Activated naive CD4-positive, alpha-beta T cell treated with anti-CD3 and anti-CD28 coated beads for 36 hours (primary cell): ENCODE measurements at regions of chr3 and their contacts with region 1.

Region 1: GRCh38 chr3:30768703-30769685 is 125.5 kb downstream of the GADL1 start:
- DNase-seq: peak; percentile 87
- H3K4me3 Mint-ChIP-seq: no peak overlapping the region
- H3K27ac Mint-ChIP-seq: no peak overlapping the region
- H3K4me1 Mint-ChIP-seq: no peaks in the 10 kb centered on the region
- H3K27me3 Mint-ChIP-seq: no peaks in the 10 kb centered on the region

Region 2: GRCh38 chr3:29958816-29959215 is 810.2 kb before region 1 on chr3:
- CTCF ChIA-PET with region 1: no interaction called
- intact Hi-C with region 1: no loop called
- DNase-seq: no peak
- H3K4me3 Mint-ChIP-seq: no peak overlapping the region
- H3K27ac Mint-ChIP-seq: no peak overlapping the region
- H3K4me1 Mint-ChIP-seq: no peaks in the 10 kb centered on the region
- H3K27me3 Mint-ChIP-seq: peaks cover 7% of the 10 kb centered on the region

Region 3: GRCh38 chr3:30779686-30780287 is 10.8 kb after region 1 on chr3:
- CTCF ChIA-PET with region 1: interaction called, 12 read pairs
- intact Hi-C with region 1: no loop called
- DNase-seq: peak; percentile 20
- H3K4me3 Mint-ChIP-seq: no peak overlapping the region
- H3K27ac Mint-ChIP-seq: no peak overlapping the region
- H3K4me1 Mint-ChIP-seq: no peaks in the 10 kb centered on the region
- H3K27me3 Mint-ChIP-seq: peaks cover 3% of the 10 kb centered on the region

Region 4: GRCh38 chr3:30894538-30895251 is 125.7 kb after region 1 on chr3 and contains the start of gene GADL1:
- CTCF ChIA-PET with region 1: interaction called, 5 read pairs
- intact Hi-C with region 1: loop called (anchors 5 kb)
- DNase-seq: peak; percentile 38
- H3K4me3 Mint-ChIP-seq: peak within 1 kb of the TSS; percentile 57
- H3K27ac Mint-ChIP-seq: no peak within 1 kb of the TSS
- H3K4me1 Mint-ChIP-seq: peaks cover 16% of the 10 kb centered on the region
- H3K27me3 Mint-ChIP-seq: peaks cover 30% of the 10 kb centered on the region
- total RNA-seq, gene GADL1: not detected

Region 5: DNA sequence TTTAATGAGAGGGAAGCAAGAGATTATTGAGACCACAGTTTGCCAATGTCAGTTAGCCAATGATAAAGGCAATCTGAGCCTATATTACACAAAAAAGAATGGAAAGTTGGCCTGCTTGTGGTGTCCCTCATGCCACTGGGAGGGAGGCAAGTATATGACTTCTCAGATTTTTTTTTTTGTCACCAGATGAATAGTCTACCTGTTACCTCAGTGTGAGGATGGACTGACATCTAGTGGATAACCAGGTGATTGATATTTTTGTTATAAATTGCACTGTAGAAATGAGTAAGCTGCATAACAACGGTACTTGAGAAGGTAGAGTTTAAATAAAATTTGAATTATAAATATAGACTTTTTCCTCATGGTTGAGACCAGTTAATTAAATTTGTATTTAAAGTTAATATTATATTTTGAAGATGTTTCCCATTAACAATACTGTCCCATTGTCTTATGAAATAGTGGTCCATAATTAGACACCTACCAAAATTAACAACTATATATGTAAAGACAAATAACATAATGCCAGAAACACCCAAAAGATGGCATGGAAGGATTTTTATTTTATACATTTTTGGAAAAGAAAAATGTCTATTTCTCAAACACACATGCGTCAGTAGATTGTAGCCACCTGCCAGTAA is 363.3 kb after region 1 on chr3:
- CTCF ChIA-PET with region 1: interaction called, 5 read pairs
- intact Hi-C with region 1: loop called (anchors 1 kb)
- DNase-seq: no peak
- H3K4me3 Mint-ChIP-seq: no peak overlapping the region
- H3K27ac Mint-ChIP-seq: no peak overlapping the region
- H3K4me1 Mint-ChIP-seq: no peaks in the 10 kb centered on the region
- H3K27me3 Mint-ChIP-seq: no peaks in the 10 kb centered on the region

Region 6: DNA sequence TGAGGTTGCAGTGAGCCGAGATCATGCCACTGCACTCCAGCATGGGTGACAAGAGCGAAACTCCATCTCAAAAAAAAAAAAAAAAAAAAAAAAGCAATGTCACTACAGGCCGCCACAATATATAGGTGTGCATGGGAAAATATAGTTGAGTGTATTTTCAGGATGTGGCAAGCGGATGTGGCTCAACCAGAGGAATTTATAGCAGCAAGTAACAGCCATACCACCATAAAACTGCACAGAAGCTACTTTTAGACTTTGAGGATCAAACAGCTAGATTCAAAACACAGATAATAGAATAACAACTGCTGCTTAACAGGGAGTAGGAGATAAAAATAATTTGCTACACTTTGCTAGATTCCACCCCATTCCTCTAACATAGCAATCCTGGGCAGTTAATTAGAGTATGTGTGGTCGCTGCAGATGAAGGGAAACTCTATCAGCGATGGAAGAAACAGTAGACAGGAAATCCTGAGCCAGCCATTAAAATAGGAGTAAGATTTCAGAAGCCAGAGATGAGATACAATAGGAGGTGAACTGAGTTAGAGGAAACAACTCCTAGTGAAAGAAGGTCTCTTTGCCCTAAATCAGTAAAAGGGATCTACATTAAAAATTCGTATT is 445.0 kb after region 1 on chr3:
- CTCF ChIA-PET with region 1: no interaction called
- intact Hi-C with region 1: loop called (anchors 2 kb)
- DNase-seq: peak; percentile 49
- H3K4me3 Mint-ChIP-seq: no peak overlapping the region
- H3K27ac Mint-ChIP-seq: peak overlapping the region; percentile 3
- H3K4me1 Mint-ChIP-seq: peaks cover 88% of the 10 kb centered on the region
- H3K27me3 Mint-ChIP-seq: no peaks in the 10 kb centered on the region

Region 7: GRCh38 chr3:31704591-31705179 is 935.7 kb after region 1 on chr3:
- CTCF ChIA-PET with region 1: no interaction called
- intact Hi-C with region 1: loop called (anchors 5 kb)
- DNase-seq: peak; percentile 74
- H3K4me3 Mint-ChIP-seq: peak overlapping the region; percentile 55
- H3K27ac Mint-ChIP-seq: peak overlapping the region; percentile 85
- H3K4me1 Mint-ChIP-seq: peaks cover 13% of the 10 kb centered on the region
- H3K27me3 Mint-ChIP-seq: peaks cover 7% of the 10 kb centered on the region

Region 8: GRCh38 chr3:32143849-32144757 is 1375.1 kb after region 1 on chr3:
- CTCF ChIA-PET with region 1: no interaction called
- intact Hi-C with region 1: loop called (anchors 5 kb)
- DNase-seq: peak; percentile 69
- H3K4me3 Mint-ChIP-seq: no peak overlapping the region
- H3K27ac Mint-ChIP-seq: no peak overlapping the region
- H3K4me1 Mint-ChIP-seq: peaks cover under 1% of the 10 kb centered on the region
- H3K27me3 Mint-ChIP-seq: no peaks in the 10 kb centered on the region